ENCODE measurements at regions of chr9 and their contacts with region 1.

Region 1: GRCh38 chr9:137236238-137236935 is 4.7 kb upstream of the TUBB4B start:
- DNase-seq: peak; percentile 95
- H3K27ac ChIP-seq: peak overlapping the region; percentile 100
- CTCF ChIP-seq: peak; percentile 100

Region 2: DNA sequence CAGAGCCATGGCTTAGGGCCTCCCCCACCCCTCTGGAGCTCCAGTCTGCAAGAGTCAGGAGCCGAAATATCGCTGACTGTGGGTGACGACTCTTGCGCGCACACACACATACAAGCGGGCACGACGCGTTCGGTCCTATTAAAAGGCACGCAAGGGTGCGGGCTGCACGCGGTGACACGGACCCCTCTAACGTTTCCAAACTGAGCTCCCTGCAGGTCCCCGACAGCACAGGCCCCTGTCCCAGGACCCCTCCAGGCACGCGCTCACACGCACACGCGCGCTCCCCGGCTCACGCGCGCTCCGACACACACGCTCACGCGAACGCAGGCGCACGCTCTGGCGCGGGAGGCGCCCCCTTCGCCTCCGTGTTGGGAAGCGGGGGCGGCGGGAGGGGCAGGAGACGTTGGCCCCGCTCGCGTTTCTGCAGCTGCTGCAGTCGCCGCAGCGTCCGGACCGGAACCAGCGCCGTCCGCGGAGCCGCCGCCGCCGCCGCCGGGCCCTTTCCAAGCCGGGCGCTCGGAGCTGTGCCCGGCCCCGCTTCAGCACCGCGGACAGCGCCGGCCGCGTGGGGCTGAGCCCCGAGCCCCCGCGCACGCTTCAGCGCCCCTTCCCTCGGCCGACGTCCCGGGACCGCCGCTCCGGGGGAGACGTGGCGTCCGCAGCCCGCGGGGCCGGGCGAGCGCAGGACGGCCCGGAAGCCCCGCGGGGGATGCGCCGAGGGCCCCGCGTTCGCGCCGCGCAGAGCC is 97.5 kb before region 1 on chr9 and contains the start of gene GRIN1:
- CTCF ChIA-PET with region 1: interaction called, 11 read pairs
- POLR2A ChIA-PET with region 1: no interaction called
- DNase-seq: peak; percentile 66
- H3K27ac ChIP-seq: no peak within 1 kb of the TSS
- CTCF ChIP-seq: no peak

Region 3: GRCh38 chr9:137176302-137177182 is 59.8 kb before region 1 on chr9:
- CTCF ChIA-PET with region 1: interaction called, 11 read pairs
- POLR2A ChIA-PET with region 1: no interaction called
- DNase-seq: peak; percentile 65
- H3K27ac ChIP-seq: peak overlapping the region; percentile 26
- CTCF ChIP-seq: peak; percentile 78; the same call in 1 of the 2 replicates

Region 4: GRCh38 chr9:137188490-137189296 is 47.7 kb before region 1 on chr9 and contains the starts of genes ANAPC2 and SSNA1:
- CTCF ChIA-PET with region 1: interaction called, 22 read pairs
- POLR2A ChIA-PET with region 1: interaction called, 4 read pairs
- DNase-seq: peak; percentile 98
- H3K27ac ChIP-seq: peak within 1 kb of the TSS; percentile 99
- CTCF ChIP-seq: peak; percentile 57

Region 5: DNA sequence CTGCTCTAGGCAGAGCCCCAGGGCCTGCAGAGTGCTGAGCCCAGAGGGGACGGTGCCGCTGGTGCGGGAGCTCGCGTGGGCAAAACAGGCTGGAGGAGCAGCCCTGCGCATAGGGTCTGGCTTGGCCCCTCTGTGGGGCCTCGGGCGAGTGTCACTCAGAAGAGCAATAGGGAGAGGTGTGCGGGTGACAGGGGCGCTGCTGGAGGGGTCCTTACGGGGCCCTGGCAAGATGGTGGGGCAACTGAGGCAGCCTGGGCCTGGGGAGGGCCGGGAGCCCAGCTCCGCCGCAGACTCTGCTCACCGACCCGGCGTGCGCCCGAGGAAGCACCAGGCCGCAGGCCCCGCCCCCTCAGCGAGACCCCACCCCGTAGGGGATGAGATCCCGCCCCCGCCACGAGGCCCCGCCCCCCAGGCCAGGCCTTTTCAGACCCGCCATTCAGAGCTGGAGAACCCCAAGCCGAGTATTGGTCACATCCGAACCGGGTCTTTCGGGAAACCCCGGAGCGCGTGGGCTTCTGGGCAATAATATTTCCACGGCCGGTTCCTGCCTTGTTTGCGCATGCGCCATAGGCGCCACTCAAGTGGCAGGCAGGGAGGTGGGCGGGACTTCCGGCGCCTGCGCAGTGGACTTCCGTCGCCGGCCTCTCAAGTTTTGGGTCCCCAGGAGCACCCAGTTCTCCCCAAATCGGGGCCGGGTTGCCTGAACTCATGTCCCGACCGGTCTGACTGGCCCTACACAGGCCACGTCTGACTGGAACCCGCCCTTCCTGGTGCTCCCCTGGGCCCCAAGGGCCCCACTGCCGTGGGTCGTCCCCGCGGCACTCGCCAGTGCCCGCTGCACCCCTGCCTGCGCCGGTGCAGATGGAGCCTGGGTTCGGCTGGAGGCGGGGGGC is 13.1 kb before region 1 on chr9:
- CTCF ChIA-PET with region 1: interaction called, 24 read pairs
- POLR2A ChIA-PET with region 1: interaction called, 7 read pairs
- DNase-seq: peak; percentile 99
- H3K27ac ChIP-seq: peak overlapping the region; percentile 95
- CTCF ChIP-seq: no peak

Region 6: DNA sequence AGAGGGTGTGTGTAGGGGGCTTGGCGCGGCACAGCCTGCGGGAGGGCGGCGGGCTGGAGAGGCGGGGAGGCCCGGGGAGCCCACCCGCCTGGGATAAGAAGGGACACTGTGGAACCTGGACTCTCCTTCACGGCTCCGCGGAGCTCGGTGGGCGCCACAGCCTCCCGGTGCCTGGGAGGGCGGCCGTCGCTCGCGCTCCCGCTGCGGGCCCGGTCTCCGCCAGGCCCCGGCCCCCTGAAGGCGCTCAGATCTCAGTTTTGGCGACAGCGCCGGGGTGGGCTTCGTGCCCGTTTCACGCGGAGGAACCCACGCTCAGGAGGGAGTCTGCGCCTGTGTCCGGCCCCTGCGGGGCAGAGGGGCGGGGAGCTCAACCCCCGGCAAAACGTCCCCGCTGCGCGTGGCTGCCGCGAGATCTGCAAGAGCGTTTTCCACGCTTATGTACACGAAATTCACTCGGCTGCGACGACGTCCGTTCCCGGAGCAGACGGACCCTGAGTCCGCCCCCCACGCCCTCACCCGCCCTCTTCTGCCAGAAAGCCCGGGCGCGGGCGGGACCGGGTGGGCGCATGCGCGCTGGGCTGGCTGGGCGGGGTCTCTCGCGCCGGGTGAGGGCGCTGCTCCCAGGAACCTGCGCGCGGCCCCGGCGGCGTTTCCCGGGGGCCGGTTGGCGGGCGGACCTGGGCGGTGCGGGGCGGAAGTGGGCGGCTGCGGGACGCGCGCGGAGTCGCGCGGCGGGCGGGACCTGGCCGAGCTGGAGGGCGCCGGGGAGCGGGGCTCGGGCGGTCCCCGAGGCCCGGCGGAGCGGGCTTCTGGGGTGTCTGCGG is 18.4 kb after region 1 on chr9 and contains the start of gene NELFB:
- CTCF ChIA-PET with region 1: interaction called, 15 read pairs
- POLR2A ChIA-PET with region 1: interaction called, 9 read pairs
- DNase-seq: peak; percentile 100
- H3K27ac ChIP-seq: peak within 1 kb of the TSS; percentile 84
- CTCF ChIP-seq: no peak

Region 7: DNA sequence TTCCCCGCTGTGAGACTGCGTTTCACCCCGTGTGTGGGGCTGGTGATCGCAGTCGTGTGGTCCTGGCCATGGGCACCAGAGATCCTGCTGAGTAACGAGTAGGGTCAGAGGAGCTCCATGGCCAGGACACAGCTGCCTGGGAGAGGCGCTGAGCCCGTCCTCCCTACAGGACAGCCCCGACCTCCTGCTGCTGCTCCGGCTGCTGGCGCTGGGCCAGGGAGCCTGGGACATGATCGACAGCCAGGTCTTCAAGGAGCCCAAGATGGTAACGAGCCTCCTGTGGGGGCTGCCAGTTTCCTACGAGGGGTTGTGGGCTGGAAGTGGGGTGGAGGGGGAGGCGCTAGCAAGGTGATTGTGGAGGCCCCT is 29.8 kb after region 1 on chr9:
- CTCF ChIA-PET with region 1: interaction called, 12 read pairs
- POLR2A ChIA-PET with region 1: interaction called, 4 read pairs
- DNase-seq: no peak
- H3K27ac ChIP-seq: peak overlapping the region; percentile 94
- CTCF ChIP-seq: no peak